ENCODE measurements at regions of chr3 and their contacts with region 1.

Region 1: GRCh38 chr3:124688581-124689454 is 41.4 kb upstream of the UMPS start:
- DNase-seq: peak; percentile 78
- ATAC-seq: peak; percentile 90 to 91
- H3K4me3 ChIP-seq: no peak overlapping the region
- H3K27ac ChIP-seq: no peak overlapping the region
- H3K4me1 ChIP-seq: no peaks in the 10 kb centered on the region
- H3K27me3 ChIP-seq: no peaks in the 10 kb centered on the region
- CTCF ChIP-seq: peak; percentile 92

Region 2: GRCh38 chr3:124451630-124452317 is 237.0 kb before region 1 on chr3:
- intact Hi-C with region 1: no loop called
- DNase-seq: no peak
- ATAC-seq: no peak
- H3K4me3 ChIP-seq: no peak overlapping the region
- H3K27ac ChIP-seq: no peak overlapping the region
- H3K4me1 ChIP-seq: no peaks in the 10 kb centered on the region
- H3K27me3 ChIP-seq: no peaks in the 10 kb centered on the region
- CTCF ChIP-seq: no peak

Region 3: GRCh38 chr3:124559881-124560574 is 128.8 kb before region 1 on chr3:
- intact Hi-C with region 1: loop called (anchors 10 kb)
- DNase-seq: peak; percentile 57
- ATAC-seq: peak; percentile 86 to 91
- H3K4me3 ChIP-seq: no peak overlapping the region
- H3K27ac ChIP-seq: no peak overlapping the region
- H3K4me1 ChIP-seq: peaks cover 19% of the 10 kb centered on the region
- H3K27me3 ChIP-seq: no peaks in the 10 kb centered on the region
- CTCF ChIP-seq: peak; percentile 90

Region 4: DNA sequence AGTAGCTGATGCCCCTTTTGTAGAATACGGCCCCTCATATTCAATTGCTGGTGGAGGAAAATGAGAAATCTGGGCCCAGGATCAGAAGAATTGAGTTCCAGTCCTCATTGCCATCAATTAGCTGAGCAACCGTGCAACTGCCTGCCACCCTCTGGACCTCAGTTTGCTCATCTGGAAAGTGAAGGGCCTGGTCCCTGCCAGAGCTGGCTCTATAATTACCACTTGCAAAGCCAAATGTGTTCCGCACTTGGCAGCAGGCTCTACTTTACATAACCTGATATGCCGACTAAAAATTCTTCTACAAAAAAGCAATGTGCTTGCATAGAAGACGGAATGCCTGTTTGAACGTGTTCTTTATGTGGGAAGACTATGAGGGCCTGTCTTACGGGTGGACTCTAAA is 206.9 kb after region 1 on chr3:
- intact Hi-C with region 1: no loop called
- DNase-seq: no peak
- ATAC-seq: no peak
- H3K4me3 ChIP-seq: no peak overlapping the region
- H3K27ac ChIP-seq: no peak overlapping the region
- H3K4me1 ChIP-seq: peaks cover 4% of the 10 kb centered on the region
- H3K27me3 ChIP-seq: no peaks in the 10 kb centered on the region
- CTCF ChIP-seq: no peak

Region 5: GRCh38 chr3:124972463-124972862 is 283.6 kb after region 1 on chr3:
- intact Hi-C with region 1: no loop called
- DNase-seq: no peak
- ATAC-seq: peak in 1 of 2 donors; percentile 36
- H3K4me3 ChIP-seq: no peak overlapping the region
- H3K27ac ChIP-seq: no peak overlapping the region
- H3K4me1 ChIP-seq: peaks cover 5% of the 10 kb centered on the region
- H3K27me3 ChIP-seq: no peaks in the 10 kb centered on the region
- CTCF ChIP-seq: no peak

Measured in lower lobe of right lung (tissue), 2 donors.